ENCODE measurements at regions of chr5 and their contacts with region 1.

Region 1: GRCh38 chr5:73312146-73312871 is 136.3 kb downstream of the FOXD1 start:
- DNase-seq: no peak
- H3K4me3 Mint-ChIP-seq: no peak overlapping the region
- H3K27ac Mint-ChIP-seq: no peak overlapping the region
- H3K4me1 Mint-ChIP-seq: no peaks in the 10 kb centered on the region
- H3K27me3 Mint-ChIP-seq: peaks cover 52% of the 10 kb centered on the region

Region 2: DNA sequence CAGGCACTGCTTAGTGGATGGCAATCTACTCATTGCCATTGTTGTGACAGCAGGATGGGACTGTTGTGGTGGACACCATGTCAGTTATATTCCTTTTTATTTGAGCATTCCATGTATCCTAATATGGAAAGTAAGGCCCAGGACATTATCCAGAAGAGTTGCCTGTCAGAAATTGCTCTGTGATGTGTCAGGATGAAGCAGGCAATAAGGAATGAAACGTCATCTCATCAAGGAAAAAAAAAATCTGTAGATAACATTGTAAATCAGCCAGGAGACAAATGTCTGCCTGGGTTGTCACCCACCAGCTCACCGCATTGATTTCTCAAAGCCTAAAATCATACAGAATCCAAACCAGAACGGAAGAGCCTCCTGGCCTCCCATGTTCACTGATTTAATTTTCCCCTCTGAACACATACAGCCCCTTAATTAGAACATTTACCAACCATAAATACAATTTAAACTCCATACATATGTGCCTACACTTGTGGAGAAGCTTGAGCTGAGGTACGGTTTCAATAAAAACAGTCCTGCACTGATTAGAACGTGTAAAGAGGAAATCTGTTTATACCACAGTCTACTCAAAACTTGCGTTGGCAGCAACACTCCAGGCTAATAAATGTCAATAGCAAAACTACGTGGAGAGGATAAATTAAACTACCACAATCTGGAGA is 62.3 kb after region 1 on chr5:
- intact Hi-C with region 1: loop called (anchors 5 kb)
- DNase-seq: no peak
- H3K4me3 Mint-ChIP-seq: no peak overlapping the region
- H3K27ac Mint-ChIP-seq: no peak overlapping the region
- H3K4me1 Mint-ChIP-seq: no peaks in the 10 kb centered on the region
- H3K27me3 Mint-ChIP-seq: peaks cover 49% of the 10 kb centered on the region

Measured in activated T-helper 2 cell treated with anti-CD3 and anti-CD28 coated beads, Interferon-gamma antibody, Interleukin-2, Interleukin-4, amounts not matched to agents 10 μg/mL and 5 μg/mL and 100 μg/mL, durations not matched to agents 14 hours and 24 hours and 36 hours (primary cell).